HEK293T (cell line): ENCODE measurements at regions of chr4 and their contacts with region 1.

Region 1: GRCh38 chr4:39458505-39459300 is at the starts of genes LIAS and RPL9:
- DNase-seq: peak; percentile 85

Region 2: GRCh38 chr4:39446751-39447573 is 11.7 kb before region 1 on chr4:
- CTCF ChIA-PET with region 1: no interaction called
- POLR2A ChIA-PET with region 1: interaction called, 20 read pairs
- DNase-seq: no peak